GM12878 (cell line): ENCODE measurements at regions of chr22 and their contacts with region 1.

Region 1: GRCh38 chr22:42444077-42444904 is 12.1 kb upstream of the NFAM1 start:
- DNase-seq: peak; percentile 73
- ATAC-seq: peak; percentile 67
- H3K4me3 ChIP-seq: peak overlapping the region; percentile 46; the same call in 1 of the 2 replicates
- H3K27ac ChIP-seq: peak overlapping the region; percentile 80
- H3K4me1 ChIP-seq: peaks cover 34% of the 10 kb centered on the region
- H3K27me3 ChIP-seq: no peaks in the 10 kb centered on the region
- CTCF ChIP-seq: peak; percentile 69 to 89 (median 75)
- EP300 ChIP-seq: no peak
- POLR2A ChIP-seq: peak; percentile 81
- RAD21 ChIP-seq: peak; percentile 63

Region 2: GRCh38 chr22:42022162-42022835 is 422.0 kb before region 1 on chr22:
- CTCF ChIA-PET with region 1: no interaction called
- POLR2A ChIA-PET with region 1: no interaction called
- RAD21 ChIA-PET with region 1: no interaction called
- SMC1A ChIA-PET with region 1: no interaction called
- in situ Hi-C with region 1: no loop called
- intact Hi-C with region 1: no loop called
- DNase-seq: peak; percentile 30
- ATAC-seq: peak; percentile 91
- H3K4me3 ChIP-seq: no peak overlapping the region
- H3K27ac ChIP-seq: peak overlapping the region; percentile 51
- H3K4me1 ChIP-seq: peaks cover 11% of the 10 kb centered on the region
- H3K27me3 ChIP-seq: no peaks in the 10 kb centered on the region
- CTCF ChIP-seq: no peak
- EP300 ChIP-seq: no peak
- POLR2A ChIP-seq: no peak
- RAD21 ChIP-seq: no peak

Region 3: GRCh38 chr22:42090596-42091454 is 353.5 kb before region 1 on chr22 and contains the start of gene NDUFA6:
- CTCF ChIA-PET with region 1: interaction called, 29 read pairs
- POLR2A ChIA-PET with region 1: interaction called, 10 read pairs
- RAD21 ChIA-PET with region 1: interaction called, 25 read pairs
- SMC1A ChIA-PET with region 1: interaction called, 8 read pairs
- in situ Hi-C with region 1: no loop called
- intact Hi-C with region 1: no loop called
- DNase-seq: peak; percentile 99
- ATAC-seq: peak; percentile 95
- H3K4me3 ChIP-seq: peak within 1 kb of the TSS; percentile 82
- H3K27ac ChIP-seq: peak within 1 kb of the TSS; percentile 87
- H3K4me1 ChIP-seq: 0 out of 2 replicates have a peak, but pooled peaks cover 3% of the 10 kb centered on the region
- H3K27me3 ChIP-seq: no peaks in the 10 kb centered on the region
- CTCF ChIP-seq: peak; percentile 95 to 99 (median 96); a peak in 5 of 6 replicates
- EP300 ChIP-seq: no peak
- POLR2A ChIP-seq: peak; percentile 98
- RAD21 ChIP-seq: peak; percentile 84
- polyA plus RNA-seq, gene NDUFA6: 473 to 511 TPM

Region 4: GRCh38 chr22:42277988-42278776 is 166.1 kb before region 1 on chr22:
- CTCF ChIA-PET with region 1: interaction called, 22 read pairs
- POLR2A ChIA-PET with region 1: interaction called, 3 read pairs
- RAD21 ChIA-PET with region 1: interaction called, 9 read pairs
- SMC1A ChIA-PET with region 1: interaction called, 8 read pairs
- in situ Hi-C with region 1: no loop called
- intact Hi-C with region 1: no loop called
- DNase-seq: no peak
- ATAC-seq: peak; percentile 94
- H3K4me3 ChIP-seq: no peak overlapping the region
- H3K27ac ChIP-seq: no peak overlapping the region
- H3K4me1 ChIP-seq: peaks cover 15% of the 10 kb centered on the region
- H3K27me3 ChIP-seq: no peaks in the 10 kb centered on the region
- CTCF ChIP-seq: peak; percentile 26 to 53 (median 39); a peak in 4 of 6 replicates
- EP300 ChIP-seq: no peak
- POLR2A ChIP-seq: no peak
- RAD21 ChIP-seq: peak; percentile 60

Region 5: GRCh38 chr22:42462016-42462415 is 17.7 kb after region 1 on chr22:
- CTCF ChIA-PET with region 1: interaction called, 102 read pairs
- POLR2A ChIA-PET with region 1: interaction called, 28 read pairs
- RAD21 ChIA-PET with region 1: interaction called, 97 read pairs
- SMC1A ChIA-PET with region 1: interaction called, 52 read pairs
- in situ Hi-C with region 1: no loop called
- intact Hi-C with region 1: no loop called
- DNase-seq: no peak
- ATAC-seq: no peak
- H3K4me3 ChIP-seq: no peak overlapping the region
- H3K27ac ChIP-seq: no peak overlapping the region
- H3K4me1 ChIP-seq: peaks cover 10% of the 10 kb centered on the region
- H3K27me3 ChIP-seq: no peaks in the 10 kb centered on the region
- CTCF ChIP-seq: no peak
- EP300 ChIP-seq: no peak
- POLR2A ChIP-seq: no peak
- RAD21 ChIP-seq: no peak

Region 6: DNA sequence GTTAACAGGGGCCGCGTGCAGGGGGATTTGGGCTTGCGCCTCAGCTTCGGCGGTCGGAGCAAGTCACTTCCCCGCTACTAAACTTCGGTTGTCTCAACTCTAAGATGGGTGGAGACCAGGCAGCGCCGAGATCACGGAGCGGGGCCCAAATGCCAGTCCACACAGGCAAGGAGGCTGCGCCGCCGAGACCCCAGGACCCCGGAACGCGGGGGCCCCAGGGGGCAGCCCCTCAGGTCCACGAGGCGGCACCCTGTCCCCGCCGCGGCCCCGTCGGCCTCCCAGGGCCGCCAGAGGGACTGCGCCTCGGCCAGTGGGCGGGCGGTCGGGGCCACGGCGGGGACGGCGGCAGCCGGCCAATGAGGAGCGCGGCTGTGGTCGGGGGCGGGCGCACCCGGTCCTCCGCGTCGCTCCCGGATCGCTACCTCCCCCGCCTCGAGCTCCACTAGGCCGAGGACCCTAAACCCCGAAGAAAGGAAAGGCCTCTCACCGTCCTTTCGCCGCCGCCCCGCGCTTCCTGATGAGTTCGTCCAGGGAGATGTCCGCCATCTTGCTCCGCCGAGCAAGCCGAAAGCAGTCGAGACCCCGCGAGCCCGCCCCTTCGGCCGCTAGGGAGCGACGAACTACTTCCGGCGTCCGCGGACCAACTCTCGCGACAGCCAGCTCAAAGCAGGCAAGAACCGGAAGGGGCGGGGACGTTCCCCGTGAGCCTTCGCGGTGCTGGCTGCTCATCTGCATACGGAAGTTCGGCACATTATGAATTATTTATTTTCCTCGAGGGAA is 170.2 kb after region 1 on chr22 and contains the start of gene POLDIP3:
- CTCF ChIA-PET with region 1: interaction called, 21 read pairs
- POLR2A ChIA-PET with region 1: no interaction called
- RAD21 ChIA-PET with region 1: interaction called, 4 read pairs
- SMC1A ChIA-PET with region 1: interaction called, 4 read pairs
- in situ Hi-C with region 1: no loop called
- intact Hi-C with region 1: loop called (anchors 5 kb)
- DNase-seq: peak; percentile 78
- ATAC-seq: peak; percentile 79
- H3K4me3 ChIP-seq: peak within 1 kb of the TSS; percentile 94
- H3K27ac ChIP-seq: peak within 1 kb of the TSS; percentile 100
- H3K4me1 ChIP-seq: peaks cover 17% of the 10 kb centered on the region
- H3K27me3 ChIP-seq: no peaks in the 10 kb centered on the region
- CTCF ChIP-seq: peak; percentile 5 to 38 (median 36); a peak in 4 of 6 replicates
- EP300 ChIP-seq: 0 out of 4 replicates have a peak, but pooled peaks of 1 of the 2 experiments have one; percentile 13
- POLR2A ChIP-seq: peak; percentile 78
- RAD21 ChIP-seq: no peak
- polyA plus RNA-seq, gene POLDIP3: 14.8 to 19.3 TPM